ENCODE measurements at regions of chr6 and their contacts with region 1.

Region 1: GRCh38 chr6:17574866-17575560 is 25.1 kb upstream of the FAM8A1 start:
- DNase-seq: no peak
- ATAC-seq: no peak
- H3K4me3 ChIP-seq: no peak overlapping the region
- H3K27ac ChIP-seq: no peak overlapping the region
- H3K4me1 ChIP-seq: no peaks in the 10 kb centered on the region
- H3K27me3 ChIP-seq: no peaks in the 10 kb centered on the region

Region 2: GRCh38 chr6:17470938-17471327 is 104.1 kb before region 1 on chr6:
- intact Hi-C with region 1: loop called in 1 of 2 experiments (anchors 10 kb)
- DNase-seq: no peak
- ATAC-seq: peak; percentile 75
- H3K4me3 ChIP-seq: no peak overlapping the region
- H3K27ac ChIP-seq: peak overlapping the region in 1 of 2 donors; percentile 43
- H3K4me1 ChIP-seq: peaks cover 0 to 8% of the 10 kb centered on the region in 2 donors
- H3K27me3 ChIP-seq: no peaks in the 10 kb centered on the region